Vagina (tissue), 2 donors: ENCODE measurements at regions of chr19 and their contacts with region 1.

Region 1: DNA sequence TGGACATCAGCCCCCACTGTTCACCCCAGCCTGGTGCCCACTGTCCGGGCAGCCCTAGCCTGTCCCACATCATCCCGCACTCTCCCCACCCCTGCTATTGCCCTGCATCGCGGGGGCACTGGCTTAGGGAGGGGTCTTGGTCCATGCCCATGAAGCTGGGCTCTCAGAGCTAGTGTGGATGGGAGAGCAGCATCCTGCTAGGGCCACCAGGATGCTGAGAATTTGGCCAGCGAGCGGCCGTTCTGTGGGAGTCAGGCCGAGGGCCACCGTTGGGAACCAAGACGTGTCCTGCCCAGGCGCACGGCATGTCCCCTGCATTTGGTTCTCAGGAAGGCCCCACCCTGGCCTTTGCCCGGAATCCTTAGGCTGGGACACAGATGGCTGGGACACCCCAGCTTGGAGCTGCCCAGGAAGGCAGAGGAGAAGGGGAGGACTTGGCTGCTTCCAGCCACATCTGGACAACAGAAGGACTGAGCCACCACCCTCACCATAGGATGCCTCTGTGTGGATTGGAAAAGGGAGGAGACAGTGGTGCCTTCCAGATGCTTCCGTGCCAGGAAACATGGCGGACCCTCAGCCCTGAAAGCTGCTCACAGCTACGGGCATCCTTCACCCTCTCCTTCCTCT is 14.6 kb downstream of the ADGRE5 start:
- DNase-seq: no peak
- H3K4me3 ChIP-seq: no peak overlapping the region
- H3K27ac ChIP-seq: no peak overlapping the region
- H3K4me1 ChIP-seq: no peaks in the 10 kb centered on the region
- H3K27me3 ChIP-seq: no peaks in the 10 kb centered on the region
- CTCF ChIP-seq: no peak
- POLR2A ChIP-seq: no peak

Region 2: GRCh38 chr19:14337510-14337909 is 58.3 kb before region 1 on chr19:
- intact Hi-C with region 1: no loop called
- DNase-seq: no peak
- H3K4me3 ChIP-seq: no peak overlapping the region
- H3K27ac ChIP-seq: no peak overlapping the region
- H3K4me1 ChIP-seq: peaks cover 7% of the 10 kb centered on the region
- H3K27me3 ChIP-seq: no peaks in the 10 kb centered on the region
- CTCF ChIP-seq: no peak
- POLR2A ChIP-seq: no peak

Region 3: GRCh38 chr19:14347999-14348889 is 47.6 kb before region 1 on chr19:
- intact Hi-C with region 1: no loop called
- DNase-seq: no peak
- H3K4me3 ChIP-seq: peak overlapping the region; percentile 13 to 29
- H3K27ac ChIP-seq: no peak overlapping the region
- H3K4me1 ChIP-seq: no peaks in the 10 kb centered on the region
- H3K27me3 ChIP-seq: no peaks in the 10 kb centered on the region
- CTCF ChIP-seq: peak; percentile 80 to 95 (median 87)
- POLR2A ChIP-seq: no peak

Region 4: GRCh38 chr19:14472202-14472938 is 76.5 kb after region 1 on chr19:
- intact Hi-C with region 1: no loop called
- DNase-seq: no peak
- H3K4me3 ChIP-seq: peak overlapping the region; percentile 26 to 29
- H3K27ac ChIP-seq: no peak overlapping the region
- H3K4me1 ChIP-seq: peaks cover 39% of the 10 kb centered on the region
- H3K27me3 ChIP-seq: no peaks in the 10 kb centered on the region
- CTCF ChIP-seq: peak; percentile 86 to 98 (median 92)
- POLR2A ChIP-seq: no peak

Region 5: DNA sequence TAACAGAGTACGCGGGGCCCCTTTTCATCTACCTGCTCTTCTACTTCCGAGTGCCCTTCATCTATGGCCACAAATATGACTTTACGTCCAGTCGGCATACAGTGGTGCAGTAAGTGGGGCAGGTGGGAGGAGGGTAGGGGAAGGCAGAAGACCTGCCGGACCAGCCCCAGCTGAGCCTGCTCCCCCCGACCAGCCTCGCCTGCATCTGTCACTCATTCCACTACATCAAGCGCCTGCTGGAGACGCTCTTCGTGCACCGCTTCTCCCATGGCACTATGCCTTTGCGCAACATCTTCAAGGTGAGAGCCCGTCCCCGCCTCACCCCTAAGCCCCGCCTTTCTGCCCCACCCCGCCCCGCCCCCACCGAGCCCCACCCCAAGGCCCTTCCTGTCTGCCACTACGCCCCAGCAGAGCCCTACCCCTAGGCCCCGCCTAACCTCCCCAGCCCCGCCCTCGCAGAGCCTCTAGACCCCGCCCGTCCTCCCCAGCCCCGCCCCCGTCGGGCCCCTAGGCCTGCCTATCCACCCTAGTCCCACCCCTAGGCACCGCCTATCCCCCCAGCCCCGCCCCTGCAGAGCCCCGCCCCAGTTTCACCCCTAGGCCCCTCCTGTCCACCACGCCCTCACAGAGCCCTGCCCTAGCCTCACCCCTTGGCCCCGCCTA is 168.3 kb after region 1 on chr19:
- intact Hi-C with region 1: no loop called
- DNase-seq: no peak
- H3K4me3 ChIP-seq: no peak overlapping the region
- H3K27ac ChIP-seq: no peak overlapping the region
- H3K4me1 ChIP-seq: peaks cover 51% of the 10 kb centered on the region
- H3K27me3 ChIP-seq: no peaks in the 10 kb centered on the region
- CTCF ChIP-seq: no peak
- POLR2A ChIP-seq: no peak

Region 6: GRCh38 chr19:14769201-14769600 is 373.4 kb after region 1 on chr19:
- intact Hi-C with region 1: loop called (anchors 5 kb)
- DNase-seq: peak in 1 of 2 donors; percentile 64
- H3K4me3 ChIP-seq: no peak overlapping the region
- H3K27ac ChIP-seq: no peak overlapping the region
- H3K4me1 ChIP-seq: no peaks in the 10 kb centered on the region
- H3K27me3 ChIP-seq: no peaks in the 10 kb centered on the region
- CTCF ChIP-seq: no peak
- POLR2A ChIP-seq: no peak